ENCODE measurements at regions of chr14 and their contacts with region 1.

Region 1: DNA sequence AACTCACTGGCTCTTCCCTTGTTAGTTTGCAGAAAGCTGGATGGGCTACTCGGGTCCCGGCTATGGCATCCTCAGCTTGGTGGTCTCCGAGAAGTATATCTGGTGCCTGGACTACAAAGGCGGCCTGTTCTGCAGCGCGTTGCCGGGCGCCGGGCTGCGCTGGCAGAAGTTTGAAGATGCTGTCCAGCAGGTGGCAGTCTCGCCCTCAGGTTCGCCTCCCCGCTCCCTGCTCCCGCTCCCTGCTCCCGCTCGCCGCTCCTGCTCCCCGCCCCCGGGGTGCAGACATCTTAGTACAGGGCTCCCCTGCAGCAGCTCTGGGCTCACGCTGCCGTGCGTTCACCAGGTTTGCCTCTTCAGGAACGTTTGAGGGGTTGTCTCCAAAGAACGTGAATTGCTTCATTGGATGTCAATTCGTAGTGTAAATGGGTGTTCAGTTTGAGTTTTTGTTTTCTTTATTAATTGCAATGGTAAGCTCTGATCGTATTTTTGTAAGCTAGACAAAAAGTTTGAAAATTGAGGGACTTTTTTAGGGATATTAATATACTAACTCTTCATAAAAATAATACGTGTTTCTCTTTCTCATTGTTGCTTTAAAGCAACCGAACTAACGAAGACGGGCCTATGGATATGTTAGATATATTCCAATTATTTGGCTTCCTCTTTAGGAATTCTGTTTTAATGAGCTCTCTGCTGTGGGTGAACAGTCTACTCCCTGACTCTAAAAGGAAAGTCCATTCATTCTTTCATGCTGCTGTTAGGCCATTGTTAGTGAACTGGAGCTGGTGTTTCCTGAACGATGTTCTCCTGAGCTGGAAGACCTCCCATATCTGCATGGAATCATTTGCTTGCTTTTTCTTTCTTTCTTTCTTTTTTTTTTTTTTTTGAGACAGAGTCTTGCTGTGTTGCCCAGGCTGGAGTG is 71.3 kb downstream of the ANKRD9 start:
- DNase-seq: peak; percentile 87
- H3K4me3 ChIP-seq: no peak overlapping the region
- H3K27ac ChIP-seq: no peak overlapping the region
- H3K4me1 ChIP-seq: no peaks in the 10 kb centered on the region
- H3K27me3 ChIP-seq: no peaks in the 10 kb centered on the region
- CTCF ChIP-seq: peak; percentile 64 to 80 (median 66)
- POLR2A ChIP-seq: no peak

Region 2: GRCh38 chr14:102516531-102517415 is 78.5 kb after region 1 on chr14:
- intact Hi-C with region 1: loop called (anchors 5 kb)
- DNase-seq: peak; percentile 59
- H3K4me3 ChIP-seq: peak overlapping the region; percentile 68 to 78
- H3K27ac ChIP-seq: peak overlapping the region in 1 of 2 donors; percentile 41
- H3K4me1 ChIP-seq: no peaks in the 10 kb centered on the region
- H3K27me3 ChIP-seq: no peaks in the 10 kb centered on the region
- CTCF ChIP-seq: peak; percentile 98 to 99 (median 98)
- POLR2A ChIP-seq: no peak

Measured in testis (tissue), 5 donors.